Aorta (tissue), 5 donors: ENCODE measurements at regions of chr1 and their contacts with region 1.

Region 1: DNA sequence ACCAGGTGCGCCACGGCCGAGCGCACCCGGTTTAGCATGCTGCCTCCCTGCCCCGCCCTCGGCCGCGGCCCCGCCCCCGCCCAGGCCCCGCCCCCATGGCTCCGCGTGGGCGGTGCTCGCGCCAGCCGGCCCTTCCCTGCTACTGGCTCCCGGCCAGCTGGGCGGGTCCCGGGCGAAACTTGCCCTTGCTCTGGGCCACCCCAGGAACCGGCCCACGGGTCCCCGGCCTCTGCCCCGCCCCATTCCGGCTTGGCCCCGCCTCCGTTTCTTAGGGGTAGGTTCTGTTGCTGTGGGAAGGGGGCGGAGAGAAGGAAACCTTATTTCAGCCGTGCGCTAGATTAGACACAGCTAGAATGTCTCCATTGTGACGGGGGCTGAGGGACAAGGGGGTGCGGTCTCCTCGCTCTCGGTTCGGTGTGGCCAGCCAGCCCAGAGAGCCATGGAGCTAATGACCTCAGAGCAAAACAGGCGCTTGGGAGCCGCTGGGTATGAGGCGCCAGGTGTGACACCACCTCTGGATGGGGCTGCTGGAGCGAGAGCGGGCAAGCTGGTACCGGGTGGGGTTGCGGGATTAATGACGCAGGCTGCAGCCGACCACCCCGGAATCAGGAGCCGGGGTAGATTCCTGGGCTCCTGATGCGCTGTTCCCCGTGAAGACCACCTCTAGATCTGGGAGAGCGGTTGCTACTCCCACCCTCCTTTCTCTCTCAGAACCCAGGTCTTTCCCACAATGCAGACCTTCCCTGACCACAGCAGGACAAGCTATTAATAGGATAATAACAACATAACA is at the start of gene PPM1J:
- DNase-seq: peak; percentile 99 to 100
- ATAC-seq: peak; percentile 93
- H3K4me3 ChIP-seq: peak within 1 kb of the TSS; percentile 14 to 37
- H3K27ac ChIP-seq: no peak within 1 kb of the TSS
- H3K4me1 ChIP-seq: no peaks in the 10 kb centered on the region
- H3K27me3 ChIP-seq: no peaks in the 10 kb centered on the region
- total RNA-seq, gene PPM1J: 3.7 to 4.3 TPM

Region 2: GRCh38 chr1:112676543-112676942 is 38.9 kb before region 1 on chr1:
- intact Hi-C with region 1: no loop called
- DNase-seq: no peak
- ATAC-seq: no peak
- H3K4me3 ChIP-seq: no peak overlapping the region
- H3K27ac ChIP-seq: no peak overlapping the region
- H3K4me1 ChIP-seq: no peaks in the 10 kb centered on the region
- H3K27me3 ChIP-seq: no peaks in the 10 kb centered on the region

Region 3: GRCh38 chr1:112803906-112804762 is 88.7 kb after region 1 on chr1:
- intact Hi-C with region 1: loop called (anchors 2 to 5 kb)
- DNase-seq: peak; percentile 74 to 80
- ATAC-seq: no peak
- H3K4me3 ChIP-seq: no peak overlapping the region
- H3K27ac ChIP-seq: no peak overlapping the region
- H3K4me1 ChIP-seq: no peaks in the 10 kb centered on the region
- H3K27me3 ChIP-seq: no peaks in the 10 kb centered on the region

Region 4: DNA sequence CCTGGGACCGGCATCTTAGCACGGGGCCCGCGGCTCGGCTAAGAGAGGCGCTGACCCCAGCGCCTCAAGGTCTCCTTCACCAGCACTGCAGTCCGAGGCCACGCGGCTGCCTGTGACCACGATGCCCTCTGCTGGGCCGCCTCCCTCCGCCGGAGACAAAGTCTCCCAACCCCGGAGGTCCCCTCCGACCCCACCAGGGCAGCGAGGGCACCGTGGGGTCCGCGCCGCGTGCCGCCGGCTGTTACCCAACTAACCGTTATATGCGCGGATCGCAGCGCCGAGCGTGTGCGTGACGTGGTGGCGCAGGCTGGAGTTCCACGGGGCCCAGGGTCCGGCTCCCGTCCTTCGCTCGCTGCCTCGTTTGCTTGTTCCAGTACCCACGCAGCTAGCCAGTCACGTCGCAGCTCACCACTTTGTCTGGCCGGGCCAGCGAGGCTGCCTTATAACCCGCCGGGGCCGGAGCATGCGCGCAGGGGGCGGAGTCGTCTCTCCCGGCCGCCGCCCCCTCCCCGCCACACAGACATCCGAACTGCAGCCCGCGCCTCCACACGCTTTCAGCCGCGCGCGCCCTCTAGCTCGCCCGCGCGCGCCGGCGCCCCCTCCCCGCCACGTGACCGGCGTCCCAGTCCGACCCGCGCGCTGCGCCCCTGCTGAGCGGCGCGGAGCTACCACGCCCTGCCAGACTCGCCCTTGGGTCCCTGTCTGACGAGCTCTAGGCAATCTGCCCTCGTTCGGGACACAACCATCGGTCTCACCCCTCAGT is 240.5 kb after region 1 on chr1 and contains the start of gene SLC16A1:
- intact Hi-C with region 1: loop called in 1 of 2 experiments (anchors 2 kb)
- DNase-seq: peak; percentile 96 to 97
- ATAC-seq: peak; percentile 96
- H3K4me3 ChIP-seq: peak within 1 kb of the TSS; percentile 51 to 56
- H3K27ac ChIP-seq: peak within 1 kb of the TSS; percentile 20 to 71
- H3K4me1 ChIP-seq: no peaks in the 10 kb centered on the region
- H3K27me3 ChIP-seq: no peaks in the 10 kb centered on the region
- total RNA-seq, gene SLC16A1: 30.3 to 32.4 TPM

Region 5: DNA sequence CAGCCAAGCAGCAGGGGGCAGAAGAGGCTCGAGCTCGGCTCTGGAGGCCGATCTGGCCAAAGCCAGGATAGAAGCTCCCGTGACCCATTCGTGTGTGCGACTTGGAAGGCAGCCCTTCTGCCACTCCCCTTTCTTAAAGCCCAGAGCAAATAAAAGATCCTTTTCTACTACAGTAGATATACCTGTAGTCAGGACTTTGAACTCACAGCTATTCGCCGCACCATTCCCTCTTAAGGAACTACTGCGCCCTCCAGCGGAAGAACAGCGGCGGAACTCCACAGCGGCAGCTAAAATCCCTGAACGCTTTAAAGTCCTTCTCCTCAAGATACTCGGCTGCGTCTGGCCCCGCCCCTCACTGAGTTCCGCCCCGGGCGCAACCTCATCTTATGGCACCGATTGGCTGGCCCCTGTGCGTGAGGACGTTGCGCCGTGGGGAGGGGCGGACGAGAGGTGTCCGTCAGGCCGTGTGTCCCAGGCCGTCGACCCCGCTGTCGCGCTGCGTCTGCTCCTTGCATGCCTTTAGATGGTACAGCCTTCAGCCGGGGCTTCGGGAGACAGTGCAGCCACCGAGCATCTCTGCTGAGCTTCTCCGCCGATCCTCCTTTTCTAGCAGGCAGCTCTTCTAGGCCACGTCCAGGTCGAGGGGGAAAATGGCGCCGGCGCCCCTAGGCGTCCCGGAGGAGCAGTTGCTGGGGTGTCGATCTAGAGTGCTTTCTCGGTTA is 357.5 kb after region 1 on chr1 and contains the start of gene LRIG2:
- intact Hi-C with region 1: loop called (anchors 5 to 10 kb)
- DNase-seq: peak; percentile 99
- ATAC-seq: peak; percentile 100
- H3K4me3 ChIP-seq: peak within 1 kb of the TSS; percentile 82 to 83
- H3K27ac ChIP-seq: peak within 1 kb of the TSS in 1 of 2 donors; percentile 39
- H3K4me1 ChIP-seq: no peaks in the 10 kb centered on the region
- H3K27me3 ChIP-seq: no peaks in the 10 kb centered on the region
- total RNA-seq, gene LRIG2: 15.1 to 24.7 TPM

Region 6: GRCh38 chr1:113255720-113256347 is 540.4 kb after region 1 on chr1:
- intact Hi-C with region 1: no loop called
- DNase-seq: no peak
- ATAC-seq: no peak
- H3K4me3 ChIP-seq: no peak overlapping the region
- H3K27ac ChIP-seq: no peak overlapping the region
- H3K4me1 ChIP-seq: no peaks in the 10 kb centered on the region
- H3K27me3 ChIP-seq: no peaks in the 10 kb centered on the region